OCI-LY7 (cell line): ENCODE measurements at regions of chr14 and their contacts with region 1.

Region 1: DNA sequence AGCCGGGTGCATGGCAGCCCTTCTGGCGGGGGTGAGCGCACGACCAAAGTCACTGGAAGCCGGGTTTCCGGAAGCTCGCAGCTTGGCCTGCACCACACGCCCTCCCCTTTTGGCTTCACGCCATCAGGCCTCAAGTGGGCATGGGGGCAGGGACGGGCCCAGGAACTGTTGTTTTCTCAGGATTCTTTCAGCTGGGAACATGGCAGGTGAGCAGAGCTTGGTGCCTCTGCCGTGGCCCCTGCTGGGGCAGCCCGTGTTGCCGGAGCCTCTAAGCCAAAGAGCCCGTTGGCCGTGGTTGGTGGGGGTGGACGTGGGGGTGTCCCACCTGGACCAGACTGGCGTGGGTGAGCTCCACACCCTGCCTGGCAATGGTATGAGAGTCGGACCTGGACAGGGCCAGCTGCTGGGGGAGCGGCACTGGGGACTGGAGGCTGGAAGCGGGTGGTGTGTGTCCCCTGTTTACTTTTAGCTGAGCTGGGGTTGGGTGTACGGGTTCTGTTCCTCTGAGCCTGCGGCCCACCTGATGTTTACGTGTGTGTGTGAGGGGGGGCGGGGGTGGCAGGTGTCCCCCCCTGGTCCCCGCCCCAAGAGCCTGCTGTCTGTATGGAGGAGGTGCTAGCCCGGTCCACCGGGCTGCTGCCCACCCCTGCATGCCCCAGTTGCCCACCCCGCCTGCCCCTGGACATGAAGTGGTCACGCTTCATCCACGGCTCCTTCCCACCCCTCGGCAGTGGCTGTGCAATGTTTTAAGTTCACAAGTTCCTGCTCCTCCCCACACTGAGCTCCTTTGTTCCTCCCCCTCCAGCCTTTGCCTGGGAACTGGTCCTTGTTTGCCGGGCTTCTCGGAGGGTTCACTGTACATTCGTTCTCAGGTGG is 28.7 kb upstream of the PLD4 start:
- DNase-seq: no peak
- H3K4me3 ChIP-seq: no peak overlapping the region
- H3K27ac ChIP-seq: no peak overlapping the region
- H3K4me1 ChIP-seq: no peaks in the 10 kb centered on the region
- CTCF ChIP-seq: no peak

Region 2: DNA sequence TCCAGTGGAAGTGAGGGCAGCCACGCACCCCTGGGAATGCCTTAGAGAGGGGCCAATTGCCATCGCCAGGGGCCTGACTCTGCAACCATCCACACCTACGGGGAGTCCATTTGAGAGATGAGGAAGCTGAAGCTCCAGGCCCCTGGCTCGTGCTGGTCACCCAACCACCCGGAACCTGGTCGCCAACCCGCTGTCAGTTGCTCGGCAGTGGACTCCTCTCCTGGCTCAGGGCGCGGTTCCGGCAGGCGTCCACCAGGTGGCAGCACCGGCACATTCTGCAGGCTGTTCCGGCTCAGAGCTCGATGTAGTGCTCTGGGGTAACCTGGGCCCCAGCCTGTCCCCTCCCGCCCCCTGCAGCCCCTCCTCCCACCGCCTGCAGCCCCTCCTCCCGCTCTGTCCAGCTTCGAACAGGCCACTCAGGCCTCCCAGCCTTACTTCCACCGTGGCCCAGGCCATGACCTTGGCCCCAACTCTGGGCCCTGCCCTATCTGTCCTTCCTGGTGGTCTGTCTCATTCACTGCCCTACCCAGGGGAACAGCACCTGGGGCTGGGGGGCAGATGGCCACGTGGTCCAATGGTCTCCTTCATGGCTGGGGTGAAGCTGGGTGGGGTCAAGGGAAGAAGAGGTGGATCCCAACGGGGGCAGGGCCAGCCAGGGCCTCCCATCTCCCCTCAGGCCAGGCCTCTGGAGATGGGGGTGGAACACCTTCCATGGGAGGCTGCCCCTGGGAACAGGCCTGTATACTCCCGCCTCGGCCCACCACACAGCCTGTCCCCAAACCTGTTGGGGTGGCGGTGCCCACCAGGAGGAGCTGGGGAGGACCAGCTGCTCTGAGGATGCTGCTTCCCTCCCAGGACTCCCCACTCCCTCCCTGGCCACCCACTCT is 127.3 kb before region 1 on chr14:
- CTCF ChIA-PET with region 1: no interaction called
- POLR2A ChIA-PET with region 1: no interaction called
- intact Hi-C with region 1: loop called (anchors 1 kb)
- DNase-seq: peak; percentile 81
- H3K4me3 ChIP-seq: no peak overlapping the region
- H3K27ac ChIP-seq: no peak overlapping the region
- H3K4me1 ChIP-seq: peaks cover 4% of the 10 kb centered on the region
- CTCF ChIP-seq: peak; percentile 78

Region 3: GRCh38 chr14:104926619-104927431 is 30.8 kb after region 1 on chr14:
- CTCF ChIA-PET with region 1: no interaction called
- POLR2A ChIA-PET with region 1: interaction called, 3 read pairs
- intact Hi-C with region 1: loop called (anchors 1 kb)
- DNase-seq: peak; percentile 91
- H3K4me3 ChIP-seq: peak overlapping the region; percentile 55
- H3K27ac ChIP-seq: no peak overlapping the region
- H3K4me1 ChIP-seq: peaks cover 45% of the 10 kb centered on the region
- CTCF ChIP-seq: no peak; the same call in 1 of the 2 replicates

Region 4: GRCh38 chr14:104940526-104941150 is 44.6 kb after region 1 on chr14:
- CTCF ChIA-PET with region 1: no interaction called
- POLR2A ChIA-PET with region 1: no interaction called
- intact Hi-C with region 1: no loop called
- DNase-seq: no peak
- H3K4me3 ChIP-seq: no peak overlapping the region
- H3K27ac ChIP-seq: no peak overlapping the region
- H3K4me1 ChIP-seq: no peaks in the 10 kb centered on the region
- CTCF ChIP-seq: peak; percentile 41

Region 5: DNA sequence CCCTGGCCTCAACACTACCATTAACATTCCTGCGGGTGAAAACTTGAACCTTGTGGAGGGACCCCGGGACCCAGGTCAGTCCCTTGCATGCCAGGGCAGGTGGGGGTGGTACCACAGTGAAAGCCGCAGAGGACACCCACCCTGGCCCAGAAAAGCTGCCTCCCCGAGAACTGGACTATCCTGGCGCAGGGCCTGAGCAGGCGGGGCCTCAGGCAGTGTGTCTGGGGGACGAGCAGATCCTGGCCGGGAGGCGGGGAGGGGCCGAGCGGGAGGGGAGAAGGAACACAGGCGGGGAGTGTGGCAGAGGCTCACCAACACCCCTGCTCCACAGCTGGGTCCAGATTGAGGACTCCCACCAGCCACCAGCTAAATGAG is 72.1 kb after region 1 on chr14:
- CTCF ChIA-PET with region 1: no interaction called
- POLR2A ChIA-PET with region 1: no interaction called
- intact Hi-C with region 1: loop called (anchors 2 kb)
- DNase-seq: no peak
- H3K4me3 ChIP-seq: peak overlapping the region; percentile 28
- H3K27ac ChIP-seq: no peak overlapping the region
- H3K4me1 ChIP-seq: peaks cover 19% of the 10 kb centered on the region
- CTCF ChIP-seq: no peak

Region 6: GRCh38 chr14:105005329-105005928 is 109.4 kb after region 1 on chr14:
- CTCF ChIA-PET with region 1: no interaction called
- POLR2A ChIA-PET with region 1: no interaction called
- intact Hi-C with region 1: no loop called
- DNase-seq: no peak
- H3K4me3 ChIP-seq: no peak overlapping the region
- H3K27ac ChIP-seq: no peak overlapping the region
- H3K4me1 ChIP-seq: no peaks in the 10 kb centered on the region
- CTCF ChIP-seq: no peak

Region 7: GRCh38 chr14:105045710-105046326 is 149.8 kb after region 1 on chr14:
- CTCF ChIA-PET with region 1: no interaction called
- POLR2A ChIA-PET with region 1: interaction called, 4 read pairs
- intact Hi-C with region 1: loop called (anchors 2 kb)
- DNase-seq: peak; percentile 90
- H3K4me3 ChIP-seq: no peak overlapping the region
- H3K27ac ChIP-seq: no peak overlapping the region
- H3K4me1 ChIP-seq: peaks cover 4% of the 10 kb centered on the region
- CTCF ChIP-seq: peak; percentile 100